BJ (cell line): ENCODE measurements at regions of chr2 and their contacts with region 1.

Region 1: DNA sequence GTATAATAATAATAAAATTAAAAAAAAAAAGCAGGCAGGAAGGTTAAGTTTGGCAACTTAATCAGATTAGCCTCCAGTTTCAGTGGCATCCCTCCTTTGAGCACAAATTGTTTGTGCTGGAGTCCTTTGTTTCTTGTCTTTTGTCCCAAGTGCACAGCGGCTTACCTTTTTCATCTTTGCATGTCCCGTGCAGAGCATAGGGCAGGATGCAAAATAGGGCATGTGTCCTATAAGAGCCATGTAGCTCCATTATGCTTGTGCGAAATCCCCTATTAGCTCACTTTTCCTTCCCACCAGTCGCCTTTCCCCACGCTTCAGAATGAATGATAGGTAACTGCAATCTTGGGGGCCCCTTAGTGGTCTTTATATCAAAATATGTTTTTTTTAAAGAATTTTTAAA is 216.8 kb downstream of the TSN start:
- DNase-seq: no peak
- H3K4me3 ChIP-seq: no peak overlapping the region
- H3K27me3 ChIP-seq: peaks cover 3% of the 10 kb centered on the region; the same call in 1 of the 2 replicates
- CTCF ChIP-seq: no peak

Region 2: DNA sequence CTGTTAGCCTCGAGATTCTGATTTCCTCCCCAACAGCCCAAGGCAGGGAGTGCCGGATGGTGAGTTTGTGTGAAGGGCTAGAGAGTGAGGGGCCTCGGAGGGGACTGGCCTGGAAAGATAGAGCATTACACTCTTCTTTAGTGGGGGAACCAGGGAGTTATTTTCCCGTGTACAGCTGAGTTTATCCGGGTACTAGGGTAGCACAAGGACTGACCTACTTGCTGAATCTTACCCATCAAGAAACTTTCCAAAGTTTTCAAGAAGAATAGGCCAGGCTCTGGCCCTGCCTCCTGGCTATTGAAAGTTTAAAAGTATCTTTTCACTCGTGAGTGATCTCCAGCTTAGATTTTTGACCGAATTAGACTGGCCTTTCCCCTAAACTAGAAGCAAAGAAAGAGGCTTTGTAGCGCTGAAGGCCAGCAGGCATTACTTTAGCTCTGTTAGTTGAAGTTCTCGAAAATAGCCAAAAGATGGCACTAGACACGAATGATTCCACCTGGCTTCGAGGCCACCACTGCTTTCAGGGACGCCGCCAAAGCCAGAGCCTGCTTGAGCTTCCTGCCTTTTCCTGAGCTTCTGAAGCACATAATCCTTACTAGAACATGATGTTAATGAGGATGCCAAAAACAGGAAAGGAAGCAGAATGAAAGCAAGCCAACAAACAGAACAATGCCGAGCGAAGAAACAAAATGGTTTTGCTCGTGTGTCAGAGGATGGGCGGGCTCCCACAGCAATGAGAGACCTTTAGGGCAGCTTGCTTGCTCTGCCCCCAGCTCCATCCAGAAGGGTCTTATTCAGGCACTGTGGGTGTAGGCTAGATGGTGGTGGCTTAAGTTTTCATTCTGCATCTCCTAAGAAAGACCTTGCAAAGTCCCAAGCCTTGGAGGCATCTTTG is 161.0 kb before region 1 on chr2:
- CTCF ChIA-PET with region 1: interaction called, 10 read pairs
- POLR2A ChIA-PET with region 1: no interaction called
- DNase-seq: peak; percentile 9
- H3K4me3 ChIP-seq: no peak overlapping the region
- H3K27me3 ChIP-seq: no peaks in the 10 kb centered on the region; the same call in 1 of the 2 replicates
- CTCF ChIP-seq: peak; percentile 68

Region 3: DNA sequence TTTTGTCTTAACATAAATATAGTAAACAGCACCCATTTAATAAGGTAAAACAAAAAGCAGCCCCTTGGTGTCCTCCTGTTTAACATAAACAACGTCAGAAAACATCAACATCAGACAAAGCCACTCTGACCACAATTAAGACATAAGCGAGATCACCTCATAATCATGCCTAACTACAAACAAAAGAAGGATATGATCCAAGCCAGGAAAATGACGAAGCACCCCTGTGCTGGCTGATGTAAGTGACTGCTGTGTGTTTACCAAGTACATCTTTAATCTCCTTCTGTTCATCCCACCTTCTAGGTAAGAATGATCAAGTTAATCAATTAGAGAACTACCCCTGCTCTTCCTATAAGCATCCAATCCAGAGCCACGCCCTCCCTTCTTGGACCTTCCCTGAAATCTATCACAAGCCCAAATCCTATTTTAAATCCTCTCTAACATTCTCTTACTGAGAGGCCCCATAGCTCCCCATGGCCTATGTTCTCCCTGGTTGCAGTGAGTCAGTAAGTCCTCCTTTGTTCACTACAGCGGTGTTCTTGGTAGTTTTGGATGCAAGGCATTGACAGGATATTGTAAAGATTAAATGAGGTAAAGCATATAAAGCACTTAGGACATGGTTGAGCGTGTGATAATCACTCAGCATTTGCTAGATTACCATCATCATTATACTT is 207.4 kb after region 1 on chr2:
- CTCF ChIA-PET with region 1: no interaction called
- POLR2A ChIA-PET with region 1: no interaction called
- DNase-seq: no peak
- H3K4me3 ChIP-seq: no peak overlapping the region
- H3K27me3 ChIP-seq: no peaks in the 10 kb centered on the region
- CTCF ChIP-seq: no peak